Dorsolateral prefrontal cortex (tissue), 120 donors: ENCODE measurements at regions of chr6 and their contacts with region 1.

Region 1: GRCh38 chr6:40308533-40309306 is 278.4 kb downstream of the LRFN2 start:
- DNase-seq: peak in 5 of 10 donors; percentile 48 to 70 (median 57)
- H3K4me3 ChIP-seq: peak overlapping the region in 1 of 59 donors; percentile 27
- H3K27ac ChIP-seq: no peak overlapping the region
- H3K27me3 ChIP-seq: no peaks in the 10 kb centered on the region
- CTCF ChIP-seq: peak; percentile 62 to 97 (median 87)

Region 2: GRCh38 chr6:39361657-39362486 is 946.8 kb before region 1 on chr6:
- intact Hi-C with region 1: loop called (anchors 5 to 10 kb)
- DNase-seq: peak; percentile 58 to 84 (median 73)
- H3K4me3 ChIP-seq: peak overlapping the region in 5 of 59 donors; percentile 13 to 34 (median 27)
- H3K27ac ChIP-seq: peak overlapping the region in 55 of 59 donors; percentile 6 to 82 (median 64)
- H3K27me3 ChIP-seq: no peaks in the 10 kb centered on the region
- CTCF ChIP-seq: peak; percentile 24 to 84 (median 70)

Region 3: GRCh38 chr6:39980839-39981580 is 327.7 kb before region 1 on chr6:
- intact Hi-C with region 1: loop called (anchors 5 kb)
- DNase-seq: peak in 3 of 10 donors; percentile 15 to 44 (median 38)
- H3K4me3 ChIP-seq: no peak overlapping the region
- H3K27ac ChIP-seq: peak overlapping the region in 25 of 59 donors; percentile 1 to 66 (median 45)
- H3K27me3 ChIP-seq: no peaks in the 10 kb centered on the region
- CTCF ChIP-seq: peak in 54 of 56 donors; percentile 38 to 79 (median 56)